Caco-2 (cell line): ENCODE measurements at regions of chr10 and their contacts with region 1.

Region 1: GRCh38 chr10:53601260-53601875 is 828.8 kb upstream of the MBL2 start:
- DNase-seq: peak in 1 of 2 experiments; percentile 43
- H3K4me3 ChIP-seq: no peak overlapping the region
- H3K4me3 Mint-ChIP-seq: no peak overlapping the region
- H3K27ac Mint-ChIP-seq: no peak overlapping the region
- H3K4me1 ChIP-seq: peaks cover 32% of the 10 kb centered on the region
- H3K4me1 Mint-ChIP-seq: peaks cover 29% of the 10 kb centered on the region
- H3K27me3 ChIP-seq: no peaks in the 10 kb centered on the region
- H3K27me3 Mint-ChIP-seq: no peaks in the 10 kb centered on the region
- CTCF ChIP-seq: peak; percentile 98 to 99

Region 2: DNA sequence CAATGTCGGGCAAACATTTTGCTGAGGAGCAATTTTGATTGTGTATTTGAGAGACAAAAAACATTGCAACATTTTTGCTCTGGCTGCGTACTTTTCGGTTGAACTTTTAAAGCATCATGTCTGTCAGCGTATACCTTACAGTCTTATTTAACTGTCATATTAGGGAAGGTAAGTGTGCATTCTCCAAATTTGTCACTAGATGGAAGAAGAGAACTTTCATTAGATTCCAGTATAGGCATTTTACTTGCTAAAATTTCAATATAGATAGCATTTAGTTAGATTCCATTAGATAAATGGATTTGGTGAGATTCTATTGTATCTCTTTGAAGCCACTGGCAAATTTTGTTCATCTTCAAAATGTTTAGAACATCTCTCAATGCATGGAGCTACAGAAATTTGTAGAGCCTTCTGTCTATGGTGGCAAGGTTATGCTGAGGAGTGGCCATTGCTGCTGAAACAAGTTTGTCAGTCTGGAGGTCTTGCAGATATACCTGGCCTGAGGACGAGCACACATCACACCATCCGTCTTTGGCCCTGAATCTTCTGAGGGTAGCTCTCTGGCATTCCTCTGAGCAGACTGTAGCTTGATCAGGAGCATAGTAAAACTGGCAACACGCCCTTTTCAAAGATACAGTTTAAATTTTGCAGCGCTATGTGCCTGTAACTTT is 391.3 kb before region 1 on chr10:
- CTCF ChIA-PET with region 1: no interaction called
- POLR2A ChIA-PET with region 1: no interaction called
- intact Hi-C with region 1: loop called (anchors 1 kb)
- DNase-seq: peak in 1 of 2 experiments; percentile 45
- H3K4me3 ChIP-seq: no peak overlapping the region
- H3K4me3 Mint-ChIP-seq: no peak overlapping the region
- H3K27ac Mint-ChIP-seq: no peak overlapping the region
- H3K4me1 ChIP-seq: 0 out of 2 replicates have a peak, but pooled peaks cover 3% of the 10 kb centered on the region
- H3K4me1 Mint-ChIP-seq: no peaks in the 10 kb centered on the region
- H3K27me3 ChIP-seq: no peaks in the 10 kb centered on the region
- H3K27me3 Mint-ChIP-seq: peaks cover 2% of the 10 kb centered on the region
- CTCF ChIP-seq: peak; percentile 77

Region 3: GRCh38 chr10:53579773-53580172 is 21.6 kb before region 1 on chr10:
- CTCF ChIA-PET with region 1: no interaction called
- POLR2A ChIA-PET with region 1: no interaction called
- intact Hi-C with region 1: no loop called
- DNase-seq: no peak
- H3K4me3 ChIP-seq: no peak overlapping the region
- H3K4me3 Mint-ChIP-seq: no peak overlapping the region
- H3K27ac Mint-ChIP-seq: no peak overlapping the region
- H3K4me1 ChIP-seq: peaks cover 5% of the 10 kb centered on the region; the same call in 1 of the 2 replicates
- H3K4me1 Mint-ChIP-seq: peaks cover 7% of the 10 kb centered on the region
- H3K27me3 ChIP-seq: no peaks in the 10 kb centered on the region
- H3K27me3 Mint-ChIP-seq: no peaks in the 10 kb centered on the region
- CTCF ChIP-seq: no peak

Region 4: DNA sequence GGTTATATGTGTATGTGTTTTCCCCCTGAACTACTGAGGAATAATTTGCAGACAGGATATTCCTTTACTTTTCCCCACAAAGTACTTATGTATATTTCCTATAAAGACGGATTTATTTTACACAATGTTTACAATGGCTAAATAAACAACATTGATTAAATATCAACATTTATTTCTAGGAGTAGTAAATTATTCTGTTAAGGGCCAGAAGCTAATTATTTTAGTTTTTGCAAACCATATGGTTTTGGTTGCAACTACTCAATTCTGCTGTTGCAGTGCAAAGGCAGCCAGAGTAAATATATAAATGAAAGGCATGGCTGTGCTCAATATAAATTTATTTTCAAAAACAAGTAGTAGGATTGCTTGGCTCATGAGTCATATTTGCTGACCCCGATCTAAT is 78.3 kb after region 1 on chr10:
- CTCF ChIA-PET with region 1: no interaction called
- POLR2A ChIA-PET with region 1: no interaction called
- intact Hi-C with region 1: no loop called
- DNase-seq: no peak
- H3K4me3 ChIP-seq: no peak overlapping the region
- H3K4me3 Mint-ChIP-seq: no peak overlapping the region
- H3K27ac Mint-ChIP-seq: no peak overlapping the region
- H3K4me1 ChIP-seq: no peaks in the 10 kb centered on the region
- H3K4me1 Mint-ChIP-seq: no peaks in the 10 kb centered on the region
- H3K27me3 ChIP-seq: no peaks in the 10 kb centered on the region
- H3K27me3 Mint-ChIP-seq: peaks cover 8% of the 10 kb centered on the region
- CTCF ChIP-seq: no peak

Region 5: GRCh38 chr10:53808677-53809372 is 207.5 kb after region 1 on chr10:
- CTCF ChIA-PET with region 1: interaction called, 8 read pairs
- POLR2A ChIA-PET with region 1: no interaction called
- intact Hi-C with region 1: loop called (anchors 1 kb)
- DNase-seq: peak; percentile 47 to 59
- H3K4me3 ChIP-seq: no peak overlapping the region
- H3K4me3 Mint-ChIP-seq: no peak overlapping the region
- H3K27ac Mint-ChIP-seq: no peak overlapping the region
- H3K4me1 ChIP-seq: no peaks in the 10 kb centered on the region
- H3K4me1 Mint-ChIP-seq: peaks cover 7% of the 10 kb centered on the region
- H3K27me3 ChIP-seq: no peaks in the 10 kb centered on the region; the same call in 1 of the 2 replicates
- H3K27me3 Mint-ChIP-seq: peaks cover 7% of the 10 kb centered on the region
- CTCF ChIP-seq: peak in 1 of 2 experiments; percentile 58

Region 6: DNA sequence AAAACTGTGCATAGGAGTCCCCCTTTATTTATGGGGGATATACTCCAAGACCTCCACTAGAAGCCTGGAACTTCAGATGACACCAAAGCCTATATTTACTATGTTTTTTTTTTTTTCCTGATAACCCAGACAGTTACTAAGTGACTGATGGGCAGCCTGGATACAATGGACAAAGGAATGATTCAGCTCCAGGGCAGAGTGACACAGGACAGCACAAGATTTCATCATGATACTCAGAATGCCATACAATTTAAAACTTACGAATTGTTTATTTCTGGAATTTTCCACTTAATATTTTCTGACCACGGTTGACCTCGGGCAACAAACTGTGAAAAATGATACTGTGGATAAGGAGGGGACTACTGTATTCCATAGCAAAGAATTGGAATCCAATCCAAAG is 356.0 kb after region 1 on chr10:
- CTCF ChIA-PET with region 1: no interaction called
- POLR2A ChIA-PET with region 1: no interaction called
- intact Hi-C with region 1: loop called (anchors 5 kb)
- DNase-seq: no peak
- H3K4me3 ChIP-seq: no peak overlapping the region
- H3K4me3 Mint-ChIP-seq: no peak overlapping the region
- H3K27ac Mint-ChIP-seq: peak overlapping the region; percentile 37
- H3K4me1 ChIP-seq: no peaks in the 10 kb centered on the region
- H3K4me1 Mint-ChIP-seq: no peaks in the 10 kb centered on the region
- H3K27me3 ChIP-seq: no peaks in the 10 kb centered on the region
- H3K27me3 Mint-ChIP-seq: no peaks in the 10 kb centered on the region
- CTCF ChIP-seq: no peak

Region 7: GRCh38 chr10:54402576-54402975 is 801.2 kb after region 1 on chr10:
- CTCF ChIA-PET with region 1: no interaction called
- POLR2A ChIA-PET with region 1: no interaction called
- intact Hi-C with region 1: loop called (anchors 1 kb)
- DNase-seq: peak in 1 of 2 experiments; percentile 59
- H3K4me3 ChIP-seq: no peak overlapping the region
- H3K4me3 Mint-ChIP-seq: no peak overlapping the region
- H3K27ac Mint-ChIP-seq: no peak overlapping the region
- H3K4me1 ChIP-seq: no peaks in the 10 kb centered on the region
- H3K4me1 Mint-ChIP-seq: no peaks in the 10 kb centered on the region
- H3K27me3 ChIP-seq: no peaks in the 10 kb centered on the region
- H3K27me3 Mint-ChIP-seq: peaks cover 4% of the 10 kb centered on the region
- CTCF ChIP-seq: peak; percentile 80 to 89